Natural killer cell (primary cell): ENCODE measurements at regions of chr13 and their contacts with region 1.

Region 1: GRCh38 chr13:48653472-48653939 is at the start of gene CYSLTR2:
- DNase-seq: peak in 1 of 2 donors; percentile 89
- ATAC-seq: peak; percentile 83 to 87 (median 83)
- H3K4me3 ChIP-seq: peak within 1 kb of the TSS; percentile 19
- H3K4me3 Mint-ChIP-seq: peak within 1 kb of the TSS; percentile 92
- H3K27ac ChIP-seq: peak within 1 kb of the TSS; percentile 80
- H3K27ac Mint-ChIP-seq: peak within 1 kb of the TSS; percentile 89 to 95
- H3K4me1 ChIP-seq: peaks cover 13% of the 10 kb centered on the region
- H3K4me1 Mint-ChIP-seq: peaks cover 36 to 48% of the 10 kb centered on the region in 2 donors
- H3K27me3 ChIP-seq: no peaks in the 10 kb centered on the region
- H3K27me3 Mint-ChIP-seq: no peaks in the 10 kb centered on the region
- CTCF ChIP-seq: no peak
- total RNA-seq, gene CYSLTR2: 5.3 to 8.6 (median 7.9) TPM

Region 2: DNA sequence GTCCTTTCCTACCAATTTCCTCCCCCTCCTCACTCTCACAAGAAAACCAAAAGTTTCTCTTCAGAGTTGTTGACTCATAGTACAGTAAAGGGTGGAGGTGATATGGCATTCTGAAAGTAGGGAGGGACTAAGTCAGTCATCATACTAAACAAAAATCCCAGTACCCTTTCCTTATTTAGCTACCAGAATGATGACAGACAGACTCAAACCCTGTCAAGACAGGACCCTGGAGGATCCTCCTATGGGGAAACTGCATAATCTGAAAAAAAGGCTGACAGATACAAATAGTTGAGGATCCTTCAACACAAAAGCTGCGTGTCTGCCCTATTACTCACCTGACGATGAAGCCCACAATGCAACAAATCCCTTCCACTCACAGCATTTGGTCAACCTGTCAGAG is 55.7 kb after region 1 on chr13:
- intact Hi-C with region 1: loop called (anchors 5 kb)
- DNase-seq: no peak
- ATAC-seq: peak in 1 of 3 donors; percentile 15
- H3K4me3 ChIP-seq: no peak overlapping the region
- H3K4me3 Mint-ChIP-seq: peak overlapping the region; percentile 70
- H3K27ac ChIP-seq: peak overlapping the region; percentile 20
- H3K27ac Mint-ChIP-seq: peak overlapping the region; percentile 73 to 88
- H3K4me1 ChIP-seq: peaks cover 15% of the 10 kb centered on the region
- H3K4me1 Mint-ChIP-seq: peaks cover 69 to 82% of the 10 kb centered on the region in 2 donors
- H3K27me3 ChIP-seq: no peaks in the 10 kb centered on the region
- H3K27me3 Mint-ChIP-seq: no peaks in the 10 kb centered on the region
- CTCF ChIP-seq: no peak